Dorsolateral prefrontal cortex (tissue), 120 donors: ENCODE measurements at regions of chr6 and their contacts with region 1.

Region 1: GRCh38 chr6:3125815-3126214 is 7.3 kb downstream of the BPHL start:
- DNase-seq: no peak
- H3K4me3 ChIP-seq: peak overlapping the region in 1 of 59 donors; percentile 12
- H3K27ac ChIP-seq: peak overlapping the region in 2 of 59 donors; percentile 27 to 28
- H3K27me3 ChIP-seq: no peaks in the 10 kb centered on the region
- CTCF ChIP-seq: no peak

Region 2: DNA sequence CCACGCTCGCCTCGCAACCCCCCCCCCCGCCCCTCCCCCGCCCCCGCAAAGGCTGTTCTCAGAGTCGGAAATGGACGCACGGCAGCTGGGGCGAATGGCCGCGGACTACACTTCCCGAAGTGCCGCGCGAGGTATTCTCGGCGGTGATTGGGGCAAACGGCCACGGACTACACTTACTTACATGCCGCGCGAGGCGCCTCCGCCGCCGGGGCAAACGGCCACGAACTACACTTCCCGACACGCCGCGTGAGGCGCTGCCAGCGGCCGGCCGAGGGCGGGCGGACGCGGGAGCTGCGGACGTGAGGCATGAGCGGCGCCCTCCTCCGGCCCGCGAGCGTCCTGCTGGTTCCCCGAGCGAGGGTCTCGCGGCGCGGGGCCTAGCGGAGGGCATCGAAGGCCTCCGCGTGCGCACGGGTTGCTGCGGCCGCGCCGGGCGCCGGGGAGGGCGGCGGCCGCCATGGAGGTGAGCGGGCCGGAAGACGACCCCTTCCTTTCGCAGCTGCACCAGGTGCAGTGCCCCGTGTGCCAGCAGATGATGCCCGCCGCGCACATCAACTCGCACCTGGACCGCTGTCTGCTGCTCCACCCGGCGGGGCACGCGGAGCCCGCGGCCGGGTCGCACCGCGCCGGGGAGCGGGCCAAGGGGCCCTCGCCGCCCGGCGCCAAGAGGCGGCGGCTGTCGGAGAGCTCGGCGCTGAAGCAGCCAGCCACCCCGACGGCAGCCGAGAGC is 360.5 kb before region 1 on chr6 and contains the start of gene WRNIP1:
- intact Hi-C with region 1: no loop called
- DNase-seq: peak; percentile 98 to 100 (median 99)
- H3K4me3 ChIP-seq: peak within 1 kb of the TSS; percentile 64 to 97 (median 87)
- H3K27ac ChIP-seq: peak within 1 kb of the TSS; percentile 86 to 99 (median 97)
- H3K27me3 ChIP-seq: no peaks in the 10 kb centered on the region
- CTCF ChIP-seq: peak; percentile 18 to 87 (median 60)
- total RNA-seq, gene WRNIP1: 32.1 to 60.1 (median 47.7) TPM

Region 3: DNA sequence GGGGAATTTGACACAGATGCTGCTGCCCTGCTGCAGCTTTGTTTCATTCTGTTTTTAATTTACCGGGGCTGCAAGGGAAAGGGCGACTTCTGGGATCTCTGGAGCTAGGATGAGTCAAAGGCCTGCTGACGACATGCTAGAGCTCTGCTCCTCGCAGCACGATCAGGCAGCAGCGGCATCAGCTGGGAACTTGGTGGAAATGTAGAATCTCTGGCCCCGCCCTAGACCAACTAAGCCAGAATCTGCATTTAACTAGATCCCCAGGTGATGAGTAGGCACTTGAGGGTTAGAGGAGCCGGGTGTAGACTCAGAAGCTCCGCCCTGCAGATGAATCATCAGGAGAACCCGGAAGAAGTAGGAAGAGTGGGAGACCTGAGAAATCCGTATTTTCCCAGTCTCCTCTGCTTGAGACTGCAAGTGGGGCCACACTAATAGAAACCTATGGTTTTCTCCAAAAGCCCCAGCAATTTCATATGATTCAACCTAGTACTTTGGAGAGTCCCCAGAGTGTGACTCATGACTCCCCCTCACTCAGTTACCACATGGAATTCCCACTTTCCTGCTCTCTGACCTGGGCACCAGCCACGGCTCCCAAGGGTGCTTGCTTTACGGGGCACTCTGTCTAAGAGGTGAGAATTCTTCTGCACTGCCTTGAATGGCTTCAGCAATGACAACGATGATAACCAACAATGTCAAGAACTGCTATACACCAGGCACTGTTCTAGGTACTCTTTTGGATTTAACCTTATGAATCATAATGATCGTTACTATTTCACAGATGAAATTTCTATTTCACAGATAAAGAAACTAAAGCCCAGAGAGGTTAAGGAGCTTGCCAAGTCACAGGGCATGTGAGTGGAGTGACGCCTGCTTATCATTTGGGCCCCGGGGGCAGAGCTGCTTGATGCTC is 83.6 kb after region 1 on chr6:
- intact Hi-C with region 1: loop called in 1 of 2 experiments (anchors 5 kb)
- DNase-seq: peak in 4 of 10 donors; percentile 54 to 58 (median 56)
- H3K4me3 ChIP-seq: peak overlapping the region in 1 of 59 donors; percentile 17
- H3K27ac ChIP-seq: peak overlapping the region in 3 of 59 donors; percentile 6 to 34 (median 16)
- H3K27me3 ChIP-seq: no peaks in the 10 kb centered on the region
- CTCF ChIP-seq: no peak

Region 4: DNA sequence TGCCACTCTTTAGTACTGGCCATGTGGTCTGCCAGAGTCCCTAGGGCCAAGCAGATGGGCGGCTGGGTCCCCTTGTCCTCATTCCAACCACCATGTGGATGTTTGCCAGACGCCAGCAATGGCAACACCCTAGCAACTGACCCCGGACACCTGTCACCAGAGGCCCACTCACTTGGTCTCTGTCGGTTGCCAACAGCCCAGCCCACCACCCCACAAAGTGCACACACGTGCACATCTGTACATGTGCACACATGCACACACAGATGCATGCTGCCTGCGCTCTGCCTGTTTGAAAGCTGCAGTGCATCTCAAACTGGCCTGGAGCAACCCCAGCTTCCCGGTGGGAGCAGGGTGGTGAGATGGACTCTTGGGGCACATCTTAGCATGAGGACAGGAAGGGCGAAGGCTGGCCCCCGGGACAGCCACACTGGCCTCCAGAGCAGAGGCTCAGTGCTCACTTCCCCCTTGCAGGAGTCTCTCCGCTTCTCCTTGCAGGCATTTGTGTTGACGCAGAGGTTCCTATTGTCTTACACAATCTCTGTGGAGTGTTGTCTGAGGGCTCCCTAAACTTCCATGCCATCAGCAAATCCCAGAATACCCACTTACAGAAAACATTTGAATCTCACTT is 186.9 kb after region 1 on chr6:
- intact Hi-C with region 1: no loop called
- DNase-seq: peak in 4 of 10 donors; percentile 24 to 41 (median 30)
- H3K4me3 ChIP-seq: no peak overlapping the region
- H3K27ac ChIP-seq: peak overlapping the region in 6 of 59 donors; percentile 6 to 59 (median 36)
- H3K27me3 ChIP-seq: no peaks in the 10 kb centered on the region
- CTCF ChIP-seq: no peak

Region 5: DNA sequence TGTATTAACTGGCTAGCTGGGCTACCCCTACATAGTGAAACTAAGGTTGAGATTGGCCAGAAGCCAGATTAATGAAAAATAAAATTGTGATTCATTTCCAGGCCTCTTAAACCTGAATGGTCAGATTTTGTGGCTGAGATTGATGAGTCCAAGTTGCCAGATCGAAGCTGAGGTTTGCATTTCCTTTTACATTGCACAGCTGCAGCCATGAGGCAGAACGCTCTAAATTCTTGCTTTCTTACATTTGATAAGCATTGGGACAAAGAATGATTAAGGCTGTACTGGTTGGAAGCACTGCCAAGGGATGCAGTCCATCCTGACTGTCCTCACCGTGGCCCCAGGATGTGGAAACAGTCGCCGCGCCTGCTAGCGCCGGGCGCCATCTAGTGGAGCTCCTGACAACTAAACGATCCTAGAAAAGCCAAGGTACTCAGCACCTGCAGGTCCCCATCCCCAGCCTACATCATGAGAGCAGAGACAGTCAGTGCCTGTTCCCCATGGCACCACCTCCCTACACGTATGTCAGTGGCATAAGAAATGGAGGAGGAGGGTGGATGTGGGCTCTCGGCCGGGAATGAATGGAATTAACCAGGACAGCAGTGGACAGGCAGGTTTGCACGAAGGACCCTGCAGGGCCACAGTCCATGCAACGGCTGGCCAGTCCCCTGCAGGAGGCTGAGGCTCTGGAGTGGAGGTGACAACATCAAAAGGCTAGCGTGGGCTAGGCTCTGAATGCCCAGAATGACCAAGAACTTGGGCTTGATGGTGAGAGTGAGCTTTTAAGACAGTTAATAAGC is 606.7 kb after region 1 on chr6:
- intact Hi-C with region 1: loop called (anchors 2 to 10 kb)
- DNase-seq: peak; percentile 69 to 87 (median 85)
- H3K4me3 ChIP-seq: peak overlapping the region in 6 of 59 donors; percentile 7 to 40 (median 10)
- H3K27ac ChIP-seq: peak overlapping the region in 6 of 59 donors; percentile 7 to 25 (median 10)
- H3K27me3 ChIP-seq: no peaks in the 10 kb centered on the region
- CTCF ChIP-seq: peak; percentile 64 to 98 (median 92)